Psoas muscle (tissue), 8 donors: ENCODE measurements at regions of chr7 and their contacts with region 1.

Region 1: DNA sequence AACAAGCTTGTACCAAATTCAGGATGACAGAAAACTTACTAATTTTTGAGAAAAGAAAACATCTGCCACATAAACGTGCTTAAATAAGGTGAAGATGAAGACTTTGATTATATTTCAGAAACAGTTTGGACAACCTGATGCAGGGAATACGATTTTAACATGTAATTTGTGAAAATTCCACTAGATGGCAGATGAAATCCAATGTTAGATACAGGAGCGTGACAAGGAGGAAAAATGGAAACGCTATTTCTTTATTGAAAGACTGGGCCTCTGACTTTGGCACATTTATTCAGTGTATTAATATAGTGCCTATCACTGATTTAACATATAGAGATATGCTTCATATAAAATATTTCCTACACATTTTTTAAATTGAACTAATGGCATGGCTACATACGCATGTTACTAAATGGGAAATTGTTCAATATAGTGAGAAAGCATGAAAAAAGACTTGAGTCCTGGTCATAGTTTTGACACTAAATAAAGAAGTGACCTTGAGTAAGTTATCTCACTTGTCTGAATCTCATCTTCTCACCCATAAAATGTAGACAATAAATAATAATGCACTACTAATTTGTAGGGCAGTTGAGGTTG is 60.7 kb downstream of the CD36 start:
- DNase-seq: no peak
- ATAC-seq: peak in 3 of 4 donors; percentile 51 to 84 (median 73)
- H3K4me3 ChIP-seq: no peak overlapping the region
- H3K27ac ChIP-seq: no peak overlapping the region
- H3K4me1 ChIP-seq: no peaks in the 10 kb centered on the region
- H3K27me3 ChIP-seq: no peaks in the 10 kb centered on the region
- CTCF ChIP-seq: peak; percentile 77

Region 2: DNA sequence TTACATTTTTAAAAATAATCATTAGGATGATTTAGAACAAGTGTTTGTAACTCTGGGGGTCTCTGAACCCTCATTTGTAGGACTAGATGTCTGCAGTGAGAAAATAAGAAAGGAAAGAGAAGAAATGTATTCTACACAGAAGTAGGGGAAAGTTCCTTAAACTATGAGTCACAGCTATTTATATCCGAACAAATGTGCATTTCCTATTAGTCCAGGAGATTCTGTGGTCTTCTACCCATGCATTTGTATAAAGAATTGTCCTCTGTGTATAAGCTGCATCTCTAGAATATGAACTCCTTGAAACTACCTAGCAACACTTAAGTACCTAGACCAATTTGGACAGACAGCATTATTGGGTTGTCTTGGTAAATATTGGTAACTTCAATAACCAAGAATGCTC is 76.6 kb before region 1 on chr7:
- intact Hi-C with region 1: no loop called
- DNase-seq: no peak
- ATAC-seq: peak; percentile 58 to 73 (median 60)
- H3K4me3 ChIP-seq: peak overlapping the region; percentile 5
- H3K27ac ChIP-seq: peak overlapping the region; percentile 92
- H3K4me1 ChIP-seq: peaks cover 57% of the 10 kb centered on the region
- H3K27me3 ChIP-seq: no peaks in the 10 kb centered on the region
- CTCF ChIP-seq: no peak

Region 3: DNA sequence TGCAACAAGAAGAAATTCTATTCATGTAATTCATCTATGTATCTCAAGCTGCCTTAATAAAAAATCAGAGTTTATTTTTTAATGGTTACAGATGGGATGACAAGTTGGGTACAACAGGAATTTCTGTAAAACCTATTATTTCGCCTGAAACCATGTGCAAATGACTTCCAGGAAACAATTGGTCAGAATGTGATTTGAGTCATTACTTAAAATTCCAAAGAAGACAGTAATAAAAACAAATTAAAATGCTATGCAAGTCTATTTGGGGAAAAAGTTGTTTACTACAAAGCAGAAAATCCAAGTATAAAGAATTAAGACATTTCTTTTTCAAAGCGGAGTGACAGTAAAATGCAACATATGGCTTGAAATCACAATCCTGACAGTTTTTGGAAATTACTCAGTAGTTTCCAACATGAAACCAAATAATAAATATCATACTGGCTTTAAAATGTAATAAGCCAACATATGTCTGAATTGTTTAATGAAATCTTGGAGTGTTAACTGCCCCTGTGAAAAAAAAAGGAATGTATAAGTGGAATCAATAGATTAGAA is 261.2 kb after region 1 on chr7:
- intact Hi-C with region 1: no loop called
- DNase-seq: no peak
- ATAC-seq: no peak
- H3K4me3 ChIP-seq: no peak overlapping the region
- H3K27ac ChIP-seq: no peak overlapping the region
- H3K4me1 ChIP-seq: no peaks in the 10 kb centered on the region
- H3K27me3 ChIP-seq: no peaks in the 10 kb centered on the region
- CTCF ChIP-seq: no peak

Region 4: GRCh38 chr7:81256991-81257390 is 557.8 kb after region 1 on chr7:
- intact Hi-C with region 1: loop called (anchors 2 to 10 kb)
- DNase-seq: peak in 1 of 2 donors; percentile 23
- ATAC-seq: peak in 2 of 4 donors; percentile 44 to 49
- H3K4me3 ChIP-seq: no peak overlapping the region
- H3K27ac ChIP-seq: no peak overlapping the region
- H3K4me1 ChIP-seq: no peaks in the 10 kb centered on the region
- H3K27me3 ChIP-seq: no peaks in the 10 kb centered on the region
- CTCF ChIP-seq: peak; percentile 48